Aorta (tissue), 5 donors: ENCODE measurements at regions of chr17 and their contacts with region 1.

Region 1: DNA sequence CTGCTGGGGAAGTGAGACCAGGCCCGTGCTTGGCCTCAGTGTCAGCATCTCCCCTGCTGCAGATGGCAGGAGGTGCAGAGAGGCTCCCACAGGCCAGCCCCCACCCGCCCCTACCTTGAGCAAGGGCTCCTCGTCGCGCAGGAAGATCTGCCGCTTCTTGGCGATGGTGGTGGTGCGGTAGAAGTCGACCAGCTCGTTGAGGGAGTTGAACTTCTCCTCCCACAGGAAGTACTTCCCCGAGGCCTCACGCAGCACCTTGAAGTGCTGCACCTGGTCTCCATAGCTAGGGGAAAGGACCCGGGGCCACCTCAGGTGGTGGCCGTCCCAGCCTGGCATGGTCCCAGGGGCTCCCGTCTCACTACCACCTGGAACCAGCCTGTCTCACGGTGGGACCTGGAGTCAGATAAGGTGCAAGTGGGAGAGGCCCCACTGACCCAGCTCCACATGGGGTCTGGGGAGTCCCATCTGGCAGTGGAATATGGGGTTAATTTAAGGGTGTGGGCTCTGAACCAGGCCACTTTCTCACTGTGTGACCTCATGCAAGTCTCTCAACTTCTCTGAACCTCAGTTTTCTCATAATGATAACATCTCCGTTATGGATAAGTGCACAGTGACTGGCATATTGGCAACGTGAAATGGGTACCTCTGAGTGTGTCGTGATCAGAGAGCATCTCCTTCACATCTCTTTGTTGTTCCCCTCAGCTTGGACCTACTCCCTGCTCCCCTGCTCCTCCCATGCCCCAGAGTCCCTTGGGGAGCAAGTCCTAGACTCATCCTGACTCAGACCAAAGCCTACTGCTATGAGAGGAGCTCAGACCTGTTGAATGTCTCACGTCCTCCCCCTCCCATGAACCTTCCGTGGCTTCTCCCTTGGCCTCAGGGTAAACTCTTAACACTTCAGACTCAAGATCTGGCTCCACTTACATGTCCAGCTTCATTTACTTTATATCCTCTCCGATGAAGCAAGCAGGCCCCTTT is 19.8 kb upstream of the FAM83G start:
- DNase-seq: peak; percentile 29 to 55
- ATAC-seq: no peak
- H3K4me3 ChIP-seq: no peak overlapping the region
- H3K27ac ChIP-seq: no peak overlapping the region
- H3K4me1 ChIP-seq: no peaks in the 10 kb centered on the region
- H3K27me3 ChIP-seq: no peaks in the 10 kb centered on the region

Region 2: GRCh38 chr17:18951941-18952842 is 72.2 kb before region 1 on chr17 and contains the start of gene SLC5A10:
- intact Hi-C with region 1: loop called in 1 of 2 experiments (anchors 10 kb)
- DNase-seq: peak in 1 of 2 donors; percentile 57
- ATAC-seq: no peak
- H3K4me3 ChIP-seq: no peak within 1 kb of the TSS
- H3K27ac ChIP-seq: no peak within 1 kb of the TSS
- H3K4me1 ChIP-seq: no peaks in the 10 kb centered on the region
- H3K27me3 ChIP-seq: no peaks in the 10 kb centered on the region
- total RNA-seq, gene SLC5A10: not detected